Kidney (tissue), 22 donors: ENCODE measurements at regions of chr7 and their contacts with region 1.

Region 1: GRCh38 chr7:138238734-138239659 is 162.7 kb downstream of the AKR1D1 start:
- DNase-seq: no peak
- H3K4me3 ChIP-seq: no peak overlapping the region
- H3K27ac ChIP-seq: no peak overlapping the region
- H3K4me1 ChIP-seq: no peaks in the 10 kb centered on the region
- H3K27me3 ChIP-seq: no peaks in the 10 kb centered on the region
- CTCF ChIP-seq: no peak

Region 2: DNA sequence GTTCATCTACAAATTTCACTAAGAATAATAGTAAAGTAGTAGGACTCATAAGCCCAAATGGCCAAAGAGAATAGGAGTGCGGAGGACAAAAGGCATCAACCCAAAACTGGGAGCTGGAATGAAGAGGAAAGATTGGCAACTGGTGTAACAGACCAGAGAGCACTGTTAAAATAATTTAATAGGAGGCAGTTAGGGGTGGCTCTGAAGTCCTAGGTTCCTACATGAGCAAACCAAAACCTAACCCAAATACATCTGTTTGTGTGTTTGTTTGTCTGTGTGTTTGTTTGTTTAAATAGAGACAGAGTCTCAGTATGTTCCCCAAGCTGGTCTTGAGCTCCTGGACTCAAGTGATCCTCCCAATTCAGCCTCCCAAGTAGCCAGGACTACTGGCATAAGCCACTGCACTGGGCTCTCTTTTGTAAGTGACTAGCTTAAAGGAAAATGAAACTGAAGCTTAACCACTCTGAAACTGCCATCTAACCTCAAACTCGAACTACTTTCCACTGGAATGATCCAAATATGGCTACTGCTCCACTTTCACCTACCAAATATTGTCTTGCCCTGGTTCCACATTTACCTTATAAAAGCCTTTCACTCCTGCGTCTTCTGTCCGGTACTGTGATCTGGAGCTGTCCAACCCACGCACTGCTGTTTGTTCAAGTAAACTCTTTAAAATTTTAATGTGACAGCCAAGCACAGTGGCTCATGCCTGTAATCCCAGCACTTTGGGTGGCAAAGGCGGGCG is 67.9 kb before region 1 on chr7:
- intact Hi-C with region 1: loop called (anchors 10 kb)
- DNase-seq: no peak
- H3K4me3 ChIP-seq: no peak overlapping the region
- H3K27ac ChIP-seq: no peak overlapping the region
- H3K4me1 ChIP-seq: no peaks in the 10 kb centered on the region
- H3K27me3 ChIP-seq: no peaks in the 10 kb centered on the region
- CTCF ChIP-seq: no peak

Region 3: GRCh38 chr7:138556771-138557484 is 317.9 kb after region 1 on chr7:
- intact Hi-C with region 1: no loop called
- DNase-seq: no peak
- H3K4me3 ChIP-seq: no peak overlapping the region
- H3K27ac ChIP-seq: no peak overlapping the region
- H3K4me1 ChIP-seq: no peaks in the 10 kb centered on the region
- H3K27me3 ChIP-seq: no peaks in the 10 kb centered on the region
- CTCF ChIP-seq: no peak